ENCODE measurements at regions of chr6 and their contacts with region 1.

Region 1: DNA sequence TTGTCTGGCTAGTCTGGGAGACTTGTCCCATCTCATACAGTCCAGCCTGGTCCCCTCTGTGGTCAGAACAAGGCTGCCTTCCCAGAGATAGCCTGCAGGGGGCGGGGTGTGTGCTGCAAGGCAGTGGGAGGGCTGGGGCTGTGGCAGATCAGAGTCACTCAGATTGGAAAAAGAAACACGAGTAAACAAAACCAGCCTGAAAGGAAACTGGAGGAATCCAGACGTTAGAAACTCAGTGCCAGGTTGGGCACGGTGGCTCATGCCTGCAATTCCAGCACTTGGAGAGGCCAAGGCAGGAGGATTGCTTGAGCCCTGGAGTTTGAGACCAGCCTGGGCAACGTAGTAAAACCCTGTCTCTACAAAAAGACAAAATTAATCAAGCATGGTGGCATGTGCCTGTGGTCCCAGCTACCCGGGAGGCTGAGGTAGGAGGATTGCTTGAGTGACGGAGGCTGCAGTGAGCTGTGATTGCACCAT is 20.2 kb downstream of the LEMD2 start:
- DNase-seq: peak; percentile 48 to 91 (median 78)

Region 2: GRCh38 chr6:33711140-33712129 is 57.2 kb before region 1 on chr6 and contains the start of gene UQCC2:
- intact Hi-C with region 1: loop called (anchors 10 kb)
- DNase-seq: peak; percentile 90 to 99 (median 97)

Region 3: GRCh38 chr6:33822575-33823395 is 54.1 kb after region 1 on chr6:
- intact Hi-C with region 1: no loop called
- DNase-seq: no peak

Region 4: DNA sequence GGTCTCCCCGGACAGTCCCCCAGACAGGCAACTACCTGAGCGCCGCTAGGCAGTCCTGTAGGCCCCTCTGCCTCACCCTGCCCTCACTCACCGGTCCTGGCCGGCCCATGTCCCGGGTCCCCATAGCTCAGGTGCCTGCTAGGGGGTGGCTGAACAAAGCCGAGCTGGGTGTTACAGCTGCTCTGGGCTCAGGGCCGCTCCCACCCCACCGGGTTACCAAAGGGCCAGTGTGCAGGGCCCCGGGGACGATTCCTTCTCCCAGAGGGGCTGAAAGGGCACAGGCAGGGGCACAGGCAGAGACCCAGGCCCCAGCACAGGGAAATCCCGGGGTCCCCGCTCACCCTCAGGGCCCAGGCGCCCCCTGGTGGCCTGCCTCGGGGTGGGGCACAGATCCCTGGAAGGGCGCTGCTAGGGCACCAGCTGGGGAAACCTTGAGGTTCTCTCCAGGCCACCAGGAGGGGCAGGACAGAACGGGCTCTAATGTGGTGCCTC is 258.8 kb after region 1 on chr6:
- intact Hi-C with region 1: loop called (anchors 10 kb)
- DNase-seq: peak in 20 of 42 donors; percentile 19 to 74 (median 47)

Measured in head of caudate nucleus (tissue), 42 donors.